Cardiac septum (tissue), 1 donor: ENCODE measurements at regions of chr1 and their contacts with region 1.

Region 1: GRCh38 chr1:110619412-110620249 is 13.5 kb upstream of the KCNA2 start:
- DNase-seq: peak; percentile 88

Region 2: GRCh38 chr1:110524311-110525251 is 95.0 kb before region 1 on chr1:
- intact Hi-C with region 1: loop called (anchors 1 kb)
- DNase-seq: no peak

Region 3: DNA sequence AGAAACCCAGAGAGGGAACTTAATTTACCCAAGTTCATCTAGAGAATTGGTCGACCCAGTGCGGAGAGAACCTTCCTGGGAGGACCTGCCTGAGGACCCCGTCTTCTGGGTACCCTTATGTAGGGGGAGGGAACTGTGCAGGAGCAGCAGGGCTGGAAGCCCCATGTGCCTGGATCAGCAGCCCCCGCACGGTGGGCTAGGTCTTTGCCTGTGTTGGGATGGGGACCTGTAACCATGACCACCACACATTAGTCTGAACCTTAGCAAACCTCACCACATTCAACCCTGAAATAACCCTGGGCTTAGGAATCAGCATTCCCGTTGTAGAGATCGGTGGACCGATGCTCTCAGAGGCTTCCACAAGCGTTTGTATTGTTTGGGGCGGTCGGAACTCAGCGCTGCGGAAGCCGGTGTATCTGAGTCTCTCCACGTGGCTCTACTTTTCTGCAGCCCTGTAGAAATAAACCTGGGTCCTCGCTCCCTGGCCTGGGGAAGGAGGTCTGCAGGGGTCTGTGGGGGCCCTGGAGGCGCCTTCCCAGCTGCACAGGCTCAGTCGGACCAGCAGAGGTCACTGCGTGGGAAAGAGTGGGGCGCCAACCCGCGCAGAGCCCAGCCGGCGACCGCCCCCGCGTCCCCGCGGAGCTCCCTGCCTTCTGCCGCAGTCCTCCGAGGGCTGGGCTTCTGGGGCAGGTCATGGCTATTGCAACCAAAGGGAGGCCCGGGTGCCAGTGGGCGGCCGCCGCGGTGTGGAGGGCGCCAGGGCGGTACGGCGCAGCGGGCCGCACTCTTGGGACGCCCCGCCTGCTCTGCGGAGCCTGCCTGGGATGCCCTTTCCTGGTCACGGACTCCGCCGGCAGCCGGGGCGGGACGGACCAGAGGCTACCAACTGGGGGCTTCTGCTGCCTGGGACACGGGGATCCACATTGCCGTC is 64.5 kb before region 1 on chr1:
- intact Hi-C with region 1: loop called (anchors 2 kb)
- DNase-seq: no peak

Region 4: GRCh38 chr1:110780600-110781484 is 161.2 kb after region 1 on chr1:
- intact Hi-C with region 1: loop called (anchors 5 kb)
- DNase-seq: no peak